ENCODE measurements at regions of chr2 and their contacts with region 1.

Region 1: DNA sequence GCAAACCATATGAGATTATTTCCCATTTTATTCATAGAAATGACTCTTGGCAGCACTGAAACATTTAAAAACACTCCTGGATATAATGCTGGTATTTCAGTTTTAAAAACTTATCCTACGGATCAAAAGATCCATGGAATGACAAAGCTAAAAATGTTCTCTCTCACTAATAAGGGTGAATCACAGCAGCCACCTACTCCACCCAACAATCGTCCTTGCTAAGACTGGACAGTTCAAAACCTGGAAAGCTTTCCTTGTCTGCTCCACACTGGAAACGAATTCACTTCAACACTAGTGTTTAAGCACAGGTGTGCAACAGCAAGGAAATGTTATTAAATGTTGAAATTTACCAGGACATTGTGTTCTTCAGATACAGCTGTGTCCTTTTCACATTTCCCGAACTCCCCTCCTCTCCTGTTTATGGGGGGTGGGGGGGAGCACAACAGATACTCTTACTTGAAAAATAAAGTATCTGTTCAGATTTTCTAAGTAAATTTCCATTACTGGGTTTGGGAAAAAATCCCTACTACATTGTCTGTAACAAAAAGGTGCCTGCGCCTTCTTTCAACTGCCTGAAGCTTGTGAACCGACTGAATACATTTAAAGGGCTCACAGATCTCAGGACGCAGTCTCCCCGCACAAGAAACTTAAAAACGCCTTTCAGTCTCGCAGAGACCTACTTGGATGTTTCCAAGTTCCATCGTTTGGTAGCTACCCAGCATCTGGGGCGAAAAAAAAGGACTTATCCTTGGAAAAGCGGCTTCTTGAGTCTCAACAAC is 1.4 kb downstream of the YWHAQ start:
- DNase-seq: no peak
- H3K4me3 ChIP-seq: peak overlapping the region; percentile 52 to 87
- H3K27ac ChIP-seq: peak overlapping the region; percentile 97
- H3K4me1 ChIP-seq: peaks cover 74% of the 10 kb centered on the region
- H3K27me3 ChIP-seq: no peaks in the 10 kb centered on the region
- CTCF ChIP-seq: no peak
- POLR2A ChIP-seq: no peak

Region 2: GRCh38 chr2:8662239-8662895 is 967.0 kb before region 1 on chr2:
- intact Hi-C with region 1: no loop called
- DNase-seq: no peak
- H3K4me3 ChIP-seq: no peak overlapping the region
- H3K27ac ChIP-seq: peak overlapping the region; percentile 65
- H3K4me1 ChIP-seq: peaks cover 20% of the 10 kb centered on the region
- H3K27me3 ChIP-seq: no peaks in the 10 kb centered on the region
- CTCF ChIP-seq: no peak
- POLR2A ChIP-seq: no peak

Region 3: DNA sequence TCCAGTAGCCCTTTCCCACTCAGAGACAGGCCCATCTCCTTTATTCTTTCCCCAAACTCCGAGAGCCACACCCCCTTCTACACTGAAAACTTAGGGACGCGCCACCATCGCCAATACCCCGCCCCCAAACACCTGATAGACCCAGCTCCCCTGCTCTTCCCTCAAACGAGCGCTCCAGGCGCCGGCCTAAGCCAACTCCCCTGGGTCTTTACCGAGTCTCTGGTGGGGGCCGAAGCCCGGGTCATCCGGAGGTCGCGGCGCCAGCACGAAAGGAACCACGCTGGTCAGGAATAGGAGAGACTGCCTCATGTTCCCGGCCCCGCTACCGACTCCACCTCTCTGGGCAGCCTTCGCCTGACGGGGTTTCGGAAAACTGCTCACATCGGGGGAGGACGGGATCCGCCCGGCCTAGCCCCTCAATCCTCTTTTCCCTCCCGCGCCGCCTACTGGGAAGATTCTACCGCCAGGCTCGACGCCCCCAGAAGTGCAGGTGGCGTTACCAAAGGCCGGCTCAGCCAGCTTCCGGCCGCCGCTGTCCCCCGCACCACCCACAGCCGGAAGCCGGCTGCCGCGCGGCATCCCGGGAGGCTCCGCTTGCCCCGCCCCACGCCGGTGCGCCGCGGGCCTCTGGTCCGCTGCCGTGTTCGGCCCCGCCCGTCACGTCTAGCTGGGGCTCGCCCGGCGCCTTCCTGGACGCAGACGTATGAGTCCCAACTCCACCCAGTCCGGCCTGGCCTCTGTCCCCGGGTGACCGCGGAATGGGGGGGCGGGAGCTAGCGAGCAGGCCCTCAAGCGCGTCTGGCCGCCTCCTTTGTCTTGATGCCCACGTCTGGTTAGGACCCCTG is 73.9 kb before region 1 on chr2 and contains the start of gene ADAM17:
- intact Hi-C with region 1: loop called (anchors 2 kb)
- DNase-seq: peak; percentile 97 to 98
- H3K4me3 ChIP-seq: peak within 1 kb of the TSS; percentile 77 to 88
- H3K27ac ChIP-seq: peak within 1 kb of the TSS; percentile 99
- H3K4me1 ChIP-seq: peaks cover 58% of the 10 kb centered on the region
- H3K27me3 ChIP-seq: no peaks in the 10 kb centered on the region
- CTCF ChIP-seq: peak in 1 of 3 experiments; percentile 64
- POLR2A ChIP-seq: peak in 1 of 2 donors; percentile 91
- total RNA-seq, gene ADAM17: 33.4 TPM

Measured in vagina (tissue), 2 donors.